ENCODE measurements at regions of chr12 and their contacts with region 1.

Region 1: DNA sequence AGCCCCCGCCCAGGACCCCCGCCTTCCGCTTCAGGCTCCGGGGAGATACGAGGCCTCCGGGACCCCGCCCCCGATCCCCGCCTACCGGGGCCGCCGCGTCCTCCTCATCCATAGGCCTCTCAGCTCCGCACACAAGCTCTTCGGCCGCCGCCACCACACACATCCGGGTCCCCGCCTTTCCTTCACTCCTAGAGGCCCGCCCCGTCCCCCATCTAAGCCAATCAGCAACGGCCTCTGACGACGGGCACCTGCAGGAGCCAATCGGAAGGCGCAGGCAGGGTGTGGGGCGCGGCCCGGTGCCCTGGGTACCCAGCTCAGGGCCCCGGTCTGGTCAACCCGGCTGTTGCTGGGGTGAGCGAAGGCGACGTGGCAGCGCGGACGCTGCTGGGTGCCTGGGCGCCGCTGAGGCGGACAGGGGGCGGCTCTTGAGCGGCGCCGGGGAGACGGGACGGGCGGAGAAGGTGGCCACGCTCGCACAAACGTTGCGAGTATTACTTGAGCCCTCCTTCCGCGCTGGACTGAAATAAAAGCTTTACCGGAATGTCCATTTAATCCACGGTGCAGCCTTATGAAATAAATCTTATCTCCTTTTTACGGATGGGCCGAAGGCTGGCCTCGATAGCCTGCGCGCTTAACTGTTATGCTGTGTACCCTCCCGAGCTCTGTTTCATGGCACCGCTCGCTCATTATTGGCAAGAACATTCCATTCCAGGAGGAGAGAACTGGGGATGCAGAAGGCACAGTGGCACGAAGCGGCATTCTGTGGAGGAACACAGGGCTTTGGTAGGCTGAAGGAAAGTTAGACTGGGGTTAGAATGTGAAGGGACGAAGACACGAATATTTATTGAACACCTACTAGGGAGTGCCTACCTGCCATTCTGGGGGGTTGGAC is at the start of gene SPRYD3:
- DNase-seq: peak; percentile 97
- H3K4me3 ChIP-seq: peak within 1 kb of the TSS; percentile 73 to 77 (median 76)
- H3K27ac ChIP-seq: peak within 1 kb of the TSS; percentile 45
- H3K4me1 ChIP-seq: peaks cover 11% of the 10 kb centered on the region
- H3K27me3 ChIP-seq: no peaks in the 10 kb centered on the region
- CTCF ChIP-seq: no peak
- total RNA-seq, gene SPRYD3: 30.0 to 39.4 TPM

Region 2: DNA sequence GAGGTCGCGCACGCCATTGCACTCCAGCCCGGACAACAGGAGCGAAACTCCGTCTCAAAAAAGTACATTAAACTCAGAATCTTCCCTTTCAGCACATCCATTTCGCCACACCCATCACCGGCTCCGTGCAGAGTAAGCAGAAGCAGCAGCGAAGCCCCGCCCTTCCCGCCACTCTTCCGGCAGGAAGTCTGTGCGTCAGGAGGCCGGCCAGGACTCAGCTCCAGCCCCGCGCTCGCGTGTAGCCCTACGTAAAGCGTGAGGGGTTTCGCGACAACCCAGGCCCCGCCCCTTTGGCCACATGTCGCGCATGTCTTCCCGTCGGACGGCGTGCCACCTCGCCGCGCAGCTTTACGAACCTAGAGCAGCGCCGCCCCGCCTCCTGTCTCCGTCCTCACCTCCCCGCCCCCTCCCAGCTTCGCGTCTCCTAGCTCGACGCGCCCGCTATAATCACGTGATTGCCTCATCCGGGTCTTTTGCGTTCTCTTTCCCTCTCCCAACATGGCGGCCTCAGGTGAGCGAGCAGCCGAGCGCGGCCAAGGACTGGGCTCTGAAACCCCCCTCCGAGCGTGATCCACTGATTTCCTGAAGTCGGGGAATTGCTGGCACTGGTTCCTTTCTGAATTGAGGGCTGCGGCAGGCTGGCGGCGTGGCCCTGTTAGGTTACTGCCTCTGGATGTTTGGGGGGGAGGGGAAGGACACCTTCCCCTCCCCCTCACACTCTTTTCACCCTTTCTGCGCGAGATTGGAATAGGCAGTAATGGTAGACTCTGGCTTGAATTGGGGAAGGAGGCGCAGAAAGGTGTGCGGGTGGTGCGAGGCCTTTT is 73.3 kb before region 1 on chr12 and contains the start of gene EIF4B:
- CTCF ChIA-PET with region 1: no interaction called
- dilution Hi-C with region 1: loop called (anchors 5 kb)
- in situ Hi-C with region 1: no loop called
- intact Hi-C with region 1: no loop called
- DNase-seq: peak; percentile 99
- H3K4me3 ChIP-seq: peak within 1 kb of the TSS; percentile 75 to 86 (median 86)
- H3K27ac ChIP-seq: peak within 1 kb of the TSS; percentile 90
- H3K4me1 ChIP-seq: peaks cover 21% of the 10 kb centered on the region
- H3K27me3 ChIP-seq: no peaks in the 10 kb centered on the region
- CTCF ChIP-seq: no peak
- total RNA-seq, gene EIF4B: 350 to 850 TPM

Region 3: GRCh38 chr12:53098982-53099651 is 19.6 kb after region 1 on chr12:
- CTCF ChIA-PET with region 1: no interaction called
- dilution Hi-C with region 1: no loop called
- in situ Hi-C with region 1: no loop called
- intact Hi-C with region 1: loop called (anchors 1 kb)
- DNase-seq: peak; percentile 86
- H3K4me3 ChIP-seq: peak overlapping the region; percentile 61 to 83 (median 79)
- H3K27ac ChIP-seq: peak overlapping the region; percentile 66
- H3K4me1 ChIP-seq: peaks cover 33% of the 10 kb centered on the region
- H3K27me3 ChIP-seq: no peaks in the 10 kb centered on the region
- CTCF ChIP-seq: peak; percentile 88 to 95

Region 4: GRCh38 chr12:53180220-53180930 is 100.9 kb after region 1 on chr12 and contains the starts of genes CSAD and ZNF740:
- CTCF ChIA-PET with region 1: no interaction called
- dilution Hi-C with region 1: loop called (anchors 10 kb)
- in situ Hi-C with region 1: no loop called
- intact Hi-C with region 1: no loop called
- DNase-seq: peak; percentile 97
- H3K4me3 ChIP-seq: peak within 1 kb of the TSS; percentile 59 to 84 (median 67)
- H3K27ac ChIP-seq: peak within 1 kb of the TSS; percentile 69
- H3K4me1 ChIP-seq: peaks cover 16% of the 10 kb centered on the region
- H3K27me3 ChIP-seq: no peaks in the 10 kb centered on the region
- CTCF ChIP-seq: no peak
- total RNA-seq, gene CSAD: 10.2 to 22.1 TPM
- total RNA-seq, gene ZNF740: 10.0 to 30.9 TPM

Region 5: GRCh38 chr12:53267999-53268647 is 188.7 kb after region 1 on chr12 and contains the start of gene ESPL1:
- CTCF ChIA-PET with region 1: no interaction called
- dilution Hi-C with region 1: loop called (anchors 10 kb)
- in situ Hi-C with region 1: no loop called
- intact Hi-C with region 1: no loop called
- DNase-seq: peak; percentile 83
- H3K4me3 ChIP-seq: peak within 1 kb of the TSS; percentile 88 to 98 (median 96)
- H3K27ac ChIP-seq: peak within 1 kb of the TSS; percentile 91
- H3K4me1 ChIP-seq: peaks cover 18% of the 10 kb centered on the region
- H3K27me3 ChIP-seq: no peaks in the 10 kb centered on the region
- CTCF ChIP-seq: peak; percentile 13 to 15
- total RNA-seq, gene ESPL1: 0.67 to 19.7 TPM

Measured in mammary epithelial cell (primary cell).